MCF 10A (cell line): ENCODE measurements at regions of chr3 and their contacts with region 1.

Region 1: GRCh38 chr3:113897373-113897777 is 50.4 kb upstream of the ZDHHC23 start:
- DNase-seq: peak; percentile 33
- H3K4me3 Mint-ChIP-seq: peak overlapping the region; percentile 64
- H3K27ac Mint-ChIP-seq: no peak overlapping the region
- H3K4me1 Mint-ChIP-seq: peaks cover 14% of the 10 kb centered on the region
- H3K27me3 Mint-ChIP-seq: no peaks in the 10 kb centered on the region
- CTCF ChIP-seq: no peak

Region 2: GRCh38 chr3:113867506-113867905 is 29.9 kb before region 1 on chr3:
- CTCF ChIA-PET with region 1: interaction called, 4 read pairs
- POLR2A ChIA-PET with region 1: interaction called, 10 read pairs
- intact Hi-C with region 1: no loop called
- DNase-seq: peak; percentile 38
- H3K4me3 Mint-ChIP-seq: no peak overlapping the region
- H3K27ac Mint-ChIP-seq: peak overlapping the region; percentile 0
- H3K4me1 Mint-ChIP-seq: peaks cover 6% of the 10 kb centered on the region
- H3K27me3 Mint-ChIP-seq: no peaks in the 10 kb centered on the region
- CTCF ChIP-seq: no peak

Region 3: DNA sequence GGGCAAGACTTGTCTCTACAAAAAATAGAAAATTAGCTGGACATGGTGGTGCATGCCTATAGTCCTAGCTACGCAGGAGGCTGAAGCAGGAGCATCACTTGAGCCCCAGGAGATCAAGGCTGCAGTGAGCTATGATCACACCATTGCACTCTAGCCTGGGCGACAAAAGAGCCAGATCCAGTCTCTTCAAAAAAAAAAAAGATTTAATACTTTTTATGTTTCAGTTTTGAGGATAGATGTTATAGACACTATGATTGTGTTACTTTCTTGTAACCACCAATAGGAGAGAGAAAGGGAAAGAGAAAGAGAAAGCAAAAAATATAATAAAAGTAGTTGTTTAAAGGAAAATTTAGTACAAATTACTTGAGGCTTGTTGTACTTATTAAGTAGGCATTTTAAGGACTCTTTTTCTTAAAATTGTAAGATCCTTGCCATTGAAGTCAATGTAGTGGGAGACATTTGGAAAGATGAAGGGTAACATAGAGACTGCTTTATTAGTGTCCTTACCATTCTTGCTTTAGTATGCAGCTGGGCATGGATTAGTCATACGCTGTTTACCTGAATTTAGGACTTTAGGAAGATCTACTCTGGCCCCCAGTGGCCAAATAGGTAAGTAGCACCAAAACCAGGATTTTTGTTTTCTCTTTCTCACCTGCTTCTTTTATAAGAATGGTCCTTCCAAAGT is 15.3 kb after region 1 on chr3:
- CTCF ChIA-PET with region 1: interaction called, 37 read pairs
- POLR2A ChIA-PET with region 1: interaction called, 14 read pairs
- intact Hi-C with region 1: no loop called
- DNase-seq: peak; percentile 82
- H3K4me3 Mint-ChIP-seq: no peak overlapping the region
- H3K27ac Mint-ChIP-seq: no peak overlapping the region
- H3K4me1 Mint-ChIP-seq: no peaks in the 10 kb centered on the region
- H3K27me3 Mint-ChIP-seq: no peaks in the 10 kb centered on the region
- CTCF ChIP-seq: peak; percentile 63

Region 4: GRCh38 chr3:114380233-114380651 is 482.9 kb after region 1 on chr3:
- CTCF ChIA-PET with region 1: no interaction called
- POLR2A ChIA-PET with region 1: no interaction called
- intact Hi-C with region 1: no loop called
- DNase-seq: no peak
- H3K4me3 Mint-ChIP-seq: no peak overlapping the region
- H3K27ac Mint-ChIP-seq: no peak overlapping the region
- H3K4me1 Mint-ChIP-seq: peaks cover 5% of the 10 kb centered on the region
- H3K27me3 Mint-ChIP-seq: no peaks in the 10 kb centered on the region
- CTCF ChIP-seq: no peak